ENCODE measurements at regions of chr15 and their contacts with region 1.

Region 1: GRCh38 chr15:25863111-25863967 is at the start of gene ATP10A:
- DNase-seq: peak; percentile 44 to 71
- ATAC-seq: peak in 2 of 3 donors; percentile 4 to 7
- H3K4me3 ChIP-seq: peak within 1 kb of the TSS; percentile 75
- H3K4me3 Mint-ChIP-seq: peak within 1 kb of the TSS; percentile 96
- H3K27ac ChIP-seq: peak within 1 kb of the TSS; percentile 90
- H3K27ac Mint-ChIP-seq: peak within 1 kb of the TSS; percentile 95 to 98
- H3K4me1 ChIP-seq: peaks cover 47% of the 10 kb centered on the region
- H3K4me1 Mint-ChIP-seq: peaks cover 35 to 51% of the 10 kb centered on the region in 2 donors
- H3K27me3 ChIP-seq: no peaks in the 10 kb centered on the region
- H3K27me3 Mint-ChIP-seq: no peaks in the 10 kb centered on the region
- CTCF ChIP-seq: no peak
- total RNA-seq, gene ATP10A: 50.1 to 67.0 (median 51.2) TPM

Region 2: GRCh38 chr15:24772686-24773373 is 1090.5 kb before region 1 on chr15:
- intact Hi-C with region 1: loop called (anchors 5 kb)
- DNase-seq: peak; percentile 60 to 76
- ATAC-seq: peak; percentile 69 to 92 (median 87)
- H3K4me3 ChIP-seq: peak overlapping the region; percentile 26
- H3K4me3 Mint-ChIP-seq: peak overlapping the region; percentile 93
- H3K27ac ChIP-seq: no peak overlapping the region
- H3K27ac Mint-ChIP-seq: peak overlapping the region; percentile 82 to 84
- H3K4me1 ChIP-seq: no peaks in the 10 kb centered on the region
- H3K4me1 Mint-ChIP-seq: peaks cover 4 to 5% of the 10 kb centered on the region in 2 donors
- H3K27me3 ChIP-seq: no peaks in the 10 kb centered on the region
- H3K27me3 Mint-ChIP-seq: no peaks in the 10 kb centered on the region
- CTCF ChIP-seq: no peak

Region 3: DNA sequence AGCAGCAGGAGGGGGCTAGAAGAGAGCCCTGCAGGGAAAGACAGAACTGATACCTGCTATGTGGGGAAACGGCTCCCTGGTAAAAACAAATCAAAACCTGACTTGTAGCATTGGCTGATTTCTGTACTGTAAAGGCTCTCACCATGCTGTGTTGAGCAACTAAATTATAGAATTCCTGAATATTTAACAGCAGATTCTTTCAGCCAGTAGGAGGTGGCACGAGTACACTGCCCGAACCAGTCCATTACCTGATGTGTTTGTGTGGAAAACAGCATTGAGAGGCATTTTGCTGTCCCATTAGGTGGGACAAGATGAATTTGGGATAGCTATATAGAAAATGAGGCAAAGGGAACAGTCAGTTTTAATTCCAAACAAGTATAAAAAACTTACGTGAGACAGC is 201.4 kb before region 1 on chr15:
- intact Hi-C with region 1: no loop called
- DNase-seq: no peak
- ATAC-seq: no peak
- H3K4me3 ChIP-seq: no peak overlapping the region
- H3K4me3 Mint-ChIP-seq: no peak overlapping the region
- H3K27ac ChIP-seq: no peak overlapping the region
- H3K27ac Mint-ChIP-seq: no peak overlapping the region
- H3K4me1 ChIP-seq: no peaks in the 10 kb centered on the region
- H3K4me1 Mint-ChIP-seq: peaks cover 0 to 9% of the 10 kb centered on the region in 2 donors
- H3K27me3 ChIP-seq: no peaks in the 10 kb centered on the region
- H3K27me3 Mint-ChIP-seq: peaks cover 26 to 46% of the 10 kb centered on the region in 2 donors
- CTCF ChIP-seq: no peak

Region 4: GRCh38 chr15:25701721-25702465 is 161.4 kb before region 1 on chr15:
- intact Hi-C with region 1: no loop called
- DNase-seq: no peak
- ATAC-seq: no peak
- H3K4me3 ChIP-seq: no peak overlapping the region
- H3K4me3 Mint-ChIP-seq: no peak overlapping the region
- H3K27ac ChIP-seq: no peak overlapping the region
- H3K27ac Mint-ChIP-seq: no peak overlapping the region
- H3K4me1 ChIP-seq: no peaks in the 10 kb centered on the region
- H3K4me1 Mint-ChIP-seq: peaks cover 0 to 5% of the 10 kb centered on the region in 2 donors
- H3K27me3 ChIP-seq: no peaks in the 10 kb centered on the region
- H3K27me3 Mint-ChIP-seq: no peaks in the 10 kb centered on the region
- CTCF ChIP-seq: no peak

Region 5: DNA sequence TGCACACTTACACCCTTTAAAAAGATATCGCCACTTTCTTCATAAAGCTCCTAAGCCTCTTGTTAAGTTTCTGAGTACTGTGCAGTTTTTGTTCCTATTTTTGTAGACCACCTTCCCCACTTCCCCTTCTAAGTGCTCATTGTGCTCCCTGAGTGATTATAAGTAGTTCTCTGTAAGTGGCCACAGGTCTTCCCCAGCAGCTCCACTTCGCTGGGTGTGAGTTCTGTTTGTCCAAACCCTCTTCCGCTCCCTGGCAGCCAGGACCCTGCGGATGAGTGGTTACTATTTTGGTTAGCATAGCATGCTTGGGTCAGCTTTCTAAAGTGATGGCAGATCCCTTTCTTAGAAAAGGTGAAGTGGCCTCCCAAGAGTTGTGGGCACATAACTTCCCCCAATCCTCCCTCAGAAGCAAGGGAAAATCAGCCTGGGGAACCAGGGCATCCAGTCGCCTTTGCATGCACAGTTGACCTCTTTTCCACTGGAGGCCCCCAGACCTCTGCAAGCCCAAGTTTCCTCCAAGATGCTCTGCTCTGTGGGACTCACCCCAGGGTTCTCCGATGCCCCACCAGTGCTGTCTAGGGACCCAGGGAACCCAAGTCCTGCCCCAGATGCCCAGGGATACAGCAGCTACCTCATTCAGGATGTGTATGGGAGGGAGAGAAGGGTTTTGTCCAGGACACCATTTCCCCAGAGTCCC is 69.8 kb before region 1 on chr15:
- intact Hi-C with region 1: loop called (anchors 2 kb)
- DNase-seq: peak in 1 of 2 donors; percentile 15
- ATAC-seq: peak in 1 of 3 donors; percentile 15
- H3K4me3 ChIP-seq: no peak overlapping the region
- H3K4me3 Mint-ChIP-seq: peak overlapping the region; percentile 11
- H3K27ac ChIP-seq: no peak overlapping the region
- H3K27ac Mint-ChIP-seq: peak overlapping the region in 1 of 2 donors; percentile 47
- H3K4me1 ChIP-seq: peaks cover 38% of the 10 kb centered on the region
- H3K4me1 Mint-ChIP-seq: peaks cover 80 to 91% of the 10 kb centered on the region in 2 donors
- H3K27me3 ChIP-seq: no peaks in the 10 kb centered on the region
- H3K27me3 Mint-ChIP-seq: no peaks in the 10 kb centered on the region
- CTCF ChIP-seq: no peak

Region 6: GRCh38 chr15:25811481-25811906 is 51.8 kb before region 1 on chr15:
- intact Hi-C with region 1: loop called (anchors 2 kb)
- DNase-seq: peak; percentile 37 to 52
- ATAC-seq: peak; percentile 71 to 88 (median 75)
- H3K4me3 ChIP-seq: no peak overlapping the region
- H3K4me3 Mint-ChIP-seq: peak overlapping the region; percentile 89
- H3K27ac ChIP-seq: no peak overlapping the region
- H3K27ac Mint-ChIP-seq: peak overlapping the region; percentile 65 to 89
- H3K4me1 ChIP-seq: peaks cover 29% of the 10 kb centered on the region
- H3K4me1 Mint-ChIP-seq: peaks cover 61 to 70% of the 10 kb centered on the region in 2 donors
- H3K27me3 ChIP-seq: no peaks in the 10 kb centered on the region
- H3K27me3 Mint-ChIP-seq: no peaks in the 10 kb centered on the region
- CTCF ChIP-seq: no peak

Region 7: GRCh38 chr15:25830844-25831451 is 32.4 kb before region 1 on chr15:
- intact Hi-C with region 1: no loop called
- DNase-seq: no peak
- ATAC-seq: peak in 1 of 3 donors; percentile 30
- H3K4me3 ChIP-seq: no peak overlapping the region
- H3K4me3 Mint-ChIP-seq: no peak overlapping the region
- H3K27ac ChIP-seq: no peak overlapping the region
- H3K27ac Mint-ChIP-seq: peak overlapping the region in 1 of 2 donors; percentile 68
- H3K4me1 ChIP-seq: peaks cover 4% of the 10 kb centered on the region
- H3K4me1 Mint-ChIP-seq: peaks cover 56 to 70% of the 10 kb centered on the region in 2 donors
- H3K27me3 ChIP-seq: no peaks in the 10 kb centered on the region
- H3K27me3 Mint-ChIP-seq: no peaks in the 10 kb centered on the region
- CTCF ChIP-seq: no peak

Region 8: GRCh38 chr15:25850154-25851111 is 12.9 kb before region 1 on chr15:
- intact Hi-C with region 1: loop called (anchors 1 kb)
- DNase-seq: peak; percentile 70 to 84
- ATAC-seq: peak; percentile 69 to 80 (median 76)
- H3K4me3 ChIP-seq: peak overlapping the region; percentile 51
- H3K4me3 Mint-ChIP-seq: peak overlapping the region; percentile 97
- H3K27ac ChIP-seq: peak overlapping the region; percentile 94
- H3K27ac Mint-ChIP-seq: peak overlapping the region; percentile 93 to 96
- H3K4me1 ChIP-seq: peaks cover 54% of the 10 kb centered on the region
- H3K4me1 Mint-ChIP-seq: peaks cover 80 to 85% of the 10 kb centered on the region in 2 donors
- H3K27me3 ChIP-seq: no peaks in the 10 kb centered on the region
- H3K27me3 Mint-ChIP-seq: no peaks in the 10 kb centered on the region
- CTCF ChIP-seq: no peak

Region 9: DNA sequence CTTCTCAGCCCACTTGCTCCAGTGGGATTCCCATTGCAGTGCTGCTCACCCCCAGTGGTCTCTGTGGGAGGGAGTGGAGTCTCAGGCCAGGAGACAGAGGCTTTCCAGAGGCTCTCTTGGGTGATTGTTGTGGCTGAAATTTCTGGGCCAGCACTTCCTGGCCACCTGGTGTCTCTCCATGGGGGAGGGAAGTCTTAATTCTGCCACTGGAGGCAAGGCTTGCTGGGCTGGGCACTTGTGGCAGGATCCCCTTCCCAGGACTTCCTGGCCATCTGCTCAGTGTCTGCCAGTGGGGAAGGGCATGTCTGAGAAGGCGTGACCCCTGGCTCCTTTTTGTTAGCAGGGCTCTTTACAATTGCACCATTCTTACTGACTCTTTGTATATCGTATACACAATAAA is 557.7 kb after region 1 on chr15:
- intact Hi-C with region 1: no loop called
- DNase-seq: no peak
- ATAC-seq: no peak
- H3K4me3 ChIP-seq: no peak overlapping the region
- H3K4me3 Mint-ChIP-seq: no peak overlapping the region
- H3K27ac ChIP-seq: no peak overlapping the region
- H3K27ac Mint-ChIP-seq: no peak overlapping the region
- H3K4me1 ChIP-seq: no peaks in the 10 kb centered on the region
- H3K4me1 Mint-ChIP-seq: no peaks in the 10 kb centered on the region
- H3K27me3 ChIP-seq: no peaks in the 10 kb centered on the region
- H3K27me3 Mint-ChIP-seq: no peaks in the 10 kb centered on the region
- CTCF ChIP-seq: no peak

Measured in natural killer cell (primary cell).